HepG2 (cell line): ENCODE measurements at regions of chr3 and their contacts with region 1.

Region 1: GRCh38 chr3:49539659-49540560 is 14.4 kb upstream of the BSN start:
- DNase-seq: peak; percentile 85
- ATAC-seq: peak; percentile 94
- H3K4me3 ChIP-seq: peak overlapping the region; percentile 55 to 78 (median 59)
- H3K27ac ChIP-seq: peak overlapping the region; percentile 70
- H3K4me1 ChIP-seq: peaks cover 42% of the 10 kb centered on the region
- H3K27me3 ChIP-seq: 0 out of 5 replicates have a peak, but pooled peaks cover 0 to 3% of the 10 kb centered on the region in 2 experiments
- CTCF ChIP-seq: peak; percentile 96
- EP300 ChIP-seq: no peak
- POLR2A ChIP-seq: peak; percentile 81 to 84
- RAD21 ChIP-seq: peak; percentile 98

Region 2: GRCh38 chr3:49469936-49470713 is 69.8 kb before region 1 on chr3 and contains the start of gene DAG1:
- CTCF ChIA-PET with region 1: no interaction called
- POLR2A ChIA-PET with region 1: interaction called, 5 read pairs
- in situ Hi-C with region 1: no loop called
- intact Hi-C with region 1: loop called (anchors 5 kb)
- DNase-seq: peak; percentile 89
- ATAC-seq: peak; percentile 87
- H3K4me3 ChIP-seq: peak within 1 kb of the TSS; percentile 74 to 94 (median 84)
- H3K27ac ChIP-seq: peak within 1 kb of the TSS; percentile 93
- H3K4me1 ChIP-seq: peaks cover 58% of the 10 kb centered on the region
- H3K27me3 ChIP-seq: no peaks in the 10 kb centered on the region; a peak in 1 of 5 replicates
- CTCF ChIP-seq: peak; percentile 17; the same call in 1 of the 2 replicates
- EP300 ChIP-seq: no peak
- POLR2A ChIP-seq: peak; percentile 34 to 78
- RAD21 ChIP-seq: peak; percentile 70
- total RNA-seq, gene DAG1: 26.0 and 50.4 TPM in 2 replicates

Region 3: DNA sequence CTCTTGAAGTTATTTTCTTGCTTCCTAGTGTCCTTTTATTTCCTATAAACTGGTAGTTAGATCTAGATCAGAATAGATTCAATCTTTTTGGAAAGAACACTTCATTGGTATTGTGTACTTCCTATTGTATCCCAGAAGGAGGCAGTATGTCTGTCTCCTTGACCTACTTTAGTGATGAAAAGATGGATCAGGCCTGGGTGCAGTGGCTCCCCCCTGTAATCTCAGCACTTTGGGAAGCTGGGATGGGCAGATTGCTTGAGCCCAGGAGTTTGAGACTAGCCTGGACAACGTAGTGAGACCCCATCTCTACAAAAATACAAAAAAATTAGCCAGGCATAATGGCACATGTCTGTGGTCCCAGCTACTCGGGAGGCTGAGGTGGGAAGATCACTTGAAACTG is 26.4 kb after region 1 on chr3:
- CTCF ChIA-PET with region 1: no interaction called
- POLR2A ChIA-PET with region 1: interaction called, 13 read pairs
- in situ Hi-C with region 1: no loop called
- intact Hi-C with region 1: no loop called
- DNase-seq: no peak
- ATAC-seq: no peak
- H3K4me3 ChIP-seq: no peak overlapping the region
- H3K27ac ChIP-seq: no peak overlapping the region
- H3K4me1 ChIP-seq: peaks cover 40% of the 10 kb centered on the region
- H3K27me3 ChIP-seq: no peaks in the 10 kb centered on the region
- CTCF ChIP-seq: peak; percentile 58
- EP300 ChIP-seq: no peak
- POLR2A ChIP-seq: no peak
- RAD21 ChIP-seq: no peak

Region 4: GRCh38 chr3:49656541-49657112 is 116.7 kb after region 1 on chr3:
- CTCF ChIA-PET with region 1: no interaction called
- POLR2A ChIA-PET with region 1: no interaction called
- in situ Hi-C with region 1: no loop called
- intact Hi-C with region 1: no loop called
- DNase-seq: no peak
- ATAC-seq: no peak
- H3K4me3 ChIP-seq: no peak overlapping the region
- H3K27ac ChIP-seq: no peak overlapping the region
- H3K4me1 ChIP-seq: peaks cover 11% of the 10 kb centered on the region
- H3K27me3 ChIP-seq: no peaks in the 10 kb centered on the region
- CTCF ChIP-seq: no peak
- EP300 ChIP-seq: no peak
- POLR2A ChIP-seq: no peak
- RAD21 ChIP-seq: no peak

Region 5: DNA sequence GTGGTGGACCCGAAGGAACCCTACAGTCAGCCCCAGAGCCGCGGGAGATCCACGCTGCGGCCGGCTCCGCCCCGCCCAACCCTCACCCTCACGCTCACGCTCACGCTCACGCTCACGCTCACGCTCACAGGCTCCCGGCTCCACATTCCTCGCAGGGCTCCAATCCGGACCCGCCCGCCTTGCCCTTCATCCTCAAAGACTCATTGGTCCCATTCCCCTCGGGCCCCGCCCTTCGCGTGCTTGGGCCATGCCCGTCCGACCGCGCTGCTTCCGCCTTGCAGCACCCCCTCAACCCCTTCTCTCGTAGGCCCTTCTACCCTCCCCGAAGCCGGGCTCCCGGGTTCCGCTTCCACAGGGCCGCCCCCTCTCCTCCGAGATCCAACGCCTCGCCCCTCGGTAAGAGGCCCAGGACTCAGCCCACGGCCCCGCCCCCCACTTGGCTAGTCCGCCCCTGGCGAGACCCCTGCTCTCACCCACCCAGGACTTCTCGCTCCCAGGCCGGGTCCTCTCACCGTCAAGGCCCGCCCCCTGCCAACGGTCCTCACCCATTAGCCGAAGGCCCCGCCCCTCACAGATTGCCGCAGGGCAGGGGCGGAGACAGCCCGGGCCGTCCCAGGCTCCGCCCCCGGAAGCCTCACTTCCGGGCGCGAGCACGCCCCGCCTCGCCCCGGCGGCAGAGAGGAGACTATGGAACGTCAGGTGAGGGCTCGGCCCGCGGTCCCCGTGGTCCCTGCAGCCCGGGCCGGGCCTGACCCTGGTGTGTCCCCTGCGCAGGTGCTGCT is 134.0 kb after region 1 on chr3 and contains the start of gene APEH:
- CTCF ChIA-PET with region 1: interaction called, 31 read pairs
- POLR2A ChIA-PET with region 1: interaction called, 98 read pairs
- in situ Hi-C with region 1: loop called (anchors 5 kb)
- intact Hi-C with region 1: loop called (anchors 1 kb)
- DNase-seq: peak; percentile 96
- ATAC-seq: peak; percentile 81
- H3K4me3 ChIP-seq: peak within 1 kb of the TSS; percentile 80 to 99 (median 80)
- H3K27ac ChIP-seq: peak within 1 kb of the TSS; percentile 85
- H3K4me1 ChIP-seq: peaks cover 64% of the 10 kb centered on the region
- H3K27me3 ChIP-seq: no peaks in the 10 kb centered on the region
- CTCF ChIP-seq: no peak
- EP300 ChIP-seq: no peak
- POLR2A ChIP-seq: no peak; a peak in 2 of 4 replicates
- RAD21 ChIP-seq: no peak
- total RNA-seq, gene APEH: 116 and 130 TPM in 2 replicates